Transverse colon (tissue), 4 donors: ENCODE measurements at regions of chr20 and their contacts with region 1.

Region 1: GRCh38 chr20:9215539-9215938 is 146.7 kb downstream of the PLCB4 start:
- DNase-seq: no peak
- H3K4me3 ChIP-seq: no peak overlapping the region
- H3K27ac ChIP-seq: no peak overlapping the region
- H3K4me1 ChIP-seq: no peaks in the 10 kb centered on the region
- H3K27me3 ChIP-seq: no peaks in the 10 kb centered on the region
- CTCF ChIP-seq: peak in 4 of 5 experiments; percentile 29 to 41 (median 38)
- EP300 ChIP-seq: no peak
- POLR2A ChIP-seq: no peak

Region 2: DNA sequence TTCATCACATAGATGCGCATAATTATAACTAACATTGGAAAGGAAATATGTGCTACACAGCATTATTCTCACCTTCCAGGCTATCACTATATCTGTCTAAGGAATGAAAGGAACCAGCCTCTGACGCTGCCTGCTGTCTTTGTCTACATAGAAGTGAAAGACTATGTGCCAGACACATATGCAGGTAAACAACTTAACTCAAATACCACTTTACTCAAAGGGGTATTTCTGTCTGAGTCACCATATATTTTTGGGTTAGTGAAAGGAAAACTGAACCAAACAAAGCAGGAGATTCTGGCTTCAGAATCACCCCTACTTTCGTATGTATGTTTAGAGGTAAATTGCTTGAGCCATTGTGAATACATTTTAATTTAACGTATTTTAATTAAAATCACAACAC is 475.3 kb before region 1 on chr20:
- in situ Hi-C with region 1: no loop called
- intact Hi-C with region 1: no loop called
- DNase-seq: no peak
- H3K4me3 ChIP-seq: no peak overlapping the region
- H3K27ac ChIP-seq: no peak overlapping the region
- H3K4me1 ChIP-seq: no peaks in the 10 kb centered on the region
- H3K27me3 ChIP-seq: no peaks in the 10 kb centered on the region
- CTCF ChIP-seq: no peak
- EP300 ChIP-seq: no peak
- POLR2A ChIP-seq: no peak

Region 3: DNA sequence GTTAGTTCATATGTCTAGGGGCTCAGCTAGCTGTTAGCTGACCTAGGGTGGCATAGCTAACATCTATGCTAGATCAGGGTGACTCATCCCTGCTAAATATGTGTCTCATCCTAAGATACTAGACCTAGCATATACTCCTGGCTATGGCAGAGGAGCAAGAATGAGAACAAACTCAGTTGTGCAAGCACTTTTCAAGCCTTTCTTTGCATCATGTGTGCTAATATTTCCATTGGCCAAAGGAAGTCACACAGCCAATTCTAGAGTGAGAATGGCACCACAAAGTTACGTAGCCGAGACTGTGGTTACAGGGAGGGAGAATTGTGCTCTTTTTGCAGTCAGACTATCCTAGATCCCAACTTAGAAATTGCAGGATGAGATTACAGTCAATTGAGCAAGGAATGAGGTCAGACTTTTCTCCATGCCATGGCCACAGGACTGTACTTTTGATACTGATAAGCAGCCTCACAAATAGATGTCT is 68.0 kb before region 1 on chr20:
- in situ Hi-C with region 1: no loop called
- intact Hi-C with region 1: no loop called
- DNase-seq: no peak
- H3K4me3 ChIP-seq: no peak overlapping the region
- H3K27ac ChIP-seq: no peak overlapping the region
- H3K4me1 ChIP-seq: peaks cover 0 to 2% (median 0%) of the 10 kb centered on the region in 4 donors
- H3K27me3 ChIP-seq: no peaks in the 10 kb centered on the region
- CTCF ChIP-seq: no peak
- EP300 ChIP-seq: no peak
- POLR2A ChIP-seq: no peak

Region 4: DNA sequence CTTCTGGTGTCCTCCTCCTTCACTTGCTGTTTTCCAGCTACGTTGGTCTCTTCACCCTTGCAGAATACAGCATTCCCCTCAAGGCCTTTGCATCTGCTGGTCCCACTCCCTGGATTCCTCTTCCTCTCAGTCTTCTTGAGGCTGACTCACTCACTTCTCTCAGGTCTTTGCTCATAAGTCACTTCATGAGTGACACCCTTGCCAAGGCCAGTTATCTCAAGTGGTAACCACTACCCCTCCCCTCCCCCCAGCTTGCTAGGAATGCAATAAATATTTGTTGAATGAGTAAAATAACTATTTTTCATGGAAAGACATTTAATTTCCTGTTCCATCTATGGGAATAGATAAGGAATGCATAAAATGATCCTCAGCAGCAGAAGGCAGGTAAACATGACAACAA is 14.9 kb before region 1 on chr20:
- in situ Hi-C with region 1: no loop called
- intact Hi-C with region 1: no loop called
- DNase-seq: no peak
- H3K4me3 ChIP-seq: no peak overlapping the region
- H3K27ac ChIP-seq: no peak overlapping the region
- H3K4me1 ChIP-seq: peaks cover 0 to 6% (median 3%) of the 10 kb centered on the region in 4 donors
- H3K27me3 ChIP-seq: no peaks in the 10 kb centered on the region
- CTCF ChIP-seq: no peak
- EP300 ChIP-seq: no peak
- POLR2A ChIP-seq: no peak

Region 5: GRCh38 chr20:9344083-9344920 is 128.8 kb after region 1 on chr20:
- in situ Hi-C with region 1: loop called in 1 of 4 experiments (anchors 10 kb)
- intact Hi-C with region 1: no loop called
- DNase-seq: no peak
- H3K4me3 ChIP-seq: no peak overlapping the region
- H3K27ac ChIP-seq: peak overlapping the region in 3 of 4 donors; percentile 13 to 45 (median 25)
- H3K4me1 ChIP-seq: peaks cover 0 to 24% (median 7%) of the 10 kb centered on the region in 4 donors
- H3K27me3 ChIP-seq: no peaks in the 10 kb centered on the region
- CTCF ChIP-seq: no peak
- EP300 ChIP-seq: no peak
- POLR2A ChIP-seq: no peak

Region 6: DNA sequence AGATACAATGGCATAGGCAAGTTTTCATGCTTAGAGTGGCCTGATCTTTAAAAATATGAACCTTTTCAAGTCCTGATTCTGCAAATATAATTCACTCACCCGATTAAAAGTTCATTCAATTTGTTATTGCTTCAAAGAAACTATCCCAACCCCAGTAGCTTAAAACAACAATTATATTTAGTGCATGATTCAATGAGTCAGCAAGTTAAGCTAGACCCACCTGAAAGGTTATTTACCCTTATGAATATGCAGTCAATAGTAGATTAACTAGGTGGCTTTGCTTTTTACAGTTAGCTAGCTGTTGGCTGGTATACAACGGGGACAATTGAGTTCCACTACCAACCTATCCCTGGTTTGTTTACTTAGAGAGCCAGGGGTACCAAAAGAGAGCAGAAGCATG is 723.7 kb after region 1 on chr20:
- in situ Hi-C with region 1: no loop called
- intact Hi-C with region 1: no loop called
- DNase-seq: no peak
- H3K4me3 ChIP-seq: no peak overlapping the region
- H3K27ac ChIP-seq: no peak overlapping the region
- H3K4me1 ChIP-seq: no peaks in the 10 kb centered on the region
- H3K27me3 ChIP-seq: no peaks in the 10 kb centered on the region
- CTCF ChIP-seq: no peak
- EP300 ChIP-seq: no peak
- POLR2A ChIP-seq: no peak